ENCODE measurements at regions of chr14 and their contacts with region 1.

Region 1: DNA sequence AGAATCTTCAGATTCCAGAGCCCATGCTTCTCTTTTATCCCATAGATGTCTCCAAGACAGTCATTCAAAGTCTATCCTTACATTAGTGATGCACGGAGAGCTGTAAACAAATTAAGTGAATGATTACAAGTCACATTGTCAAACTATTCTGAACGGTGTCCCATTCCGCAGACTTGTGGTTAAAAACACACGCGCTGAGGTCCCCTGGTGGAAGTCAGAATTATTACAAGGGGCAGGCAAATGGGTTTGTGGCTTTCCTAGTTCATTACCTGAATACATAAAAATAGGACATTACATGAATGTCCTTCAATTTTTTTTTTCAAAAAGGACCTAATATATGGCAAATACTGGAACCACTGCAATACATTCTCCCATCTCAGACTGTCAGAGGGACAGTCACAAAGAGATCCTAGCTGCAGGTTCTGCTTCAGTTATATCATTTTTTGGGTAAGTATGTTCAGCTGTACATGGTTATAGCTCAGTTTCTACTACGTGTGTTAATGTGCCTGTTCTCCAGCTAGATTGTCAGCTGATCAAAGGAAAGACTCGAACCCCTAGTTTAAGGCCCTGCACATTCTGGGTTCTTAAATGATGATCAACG is 53.1 kb upstream of the STON2 start:
- DNase-seq: peak in 1 of 2 experiments; percentile 74
- H3K4me3 ChIP-seq: no peak overlapping the region
- H3K27ac ChIP-seq: no peak overlapping the region
- H3K4me1 ChIP-seq: peaks cover 0 to 10% (median 7%) of the 10 kb centered on the region in 4 experiments; a peak in 4 of 7 replicates
- H3K27me3 ChIP-seq: no peaks in the 10 kb centered on the region; a peak in 1 of 7 replicates
- CTCF ChIP-seq: peak; percentile 58 to 88 (median 81)
- EP300 ChIP-seq: no peak
- POLR2A ChIP-seq: no peak
- RAD21 ChIP-seq: peak; percentile 93 to 94

Region 2: GRCh38 chr14:81247146-81247766 is 206.0 kb before region 1 on chr14:
- CTCF ChIA-PET with region 1: interaction called, 23 read pairs
- POLR2A ChIA-PET with region 1: interaction called, 4 read pairs
- DNase-seq: no peak
- H3K4me3 ChIP-seq: no peak overlapping the region
- H3K27ac ChIP-seq: no peak overlapping the region
- H3K4me1 ChIP-seq: no peaks in the 10 kb centered on the region
- H3K27me3 ChIP-seq: no peaks in the 10 kb centered on the region
- CTCF ChIP-seq: no peak
- EP300 ChIP-seq: no peak
- POLR2A ChIP-seq: no peak
- RAD21 ChIP-seq: no peak

Region 3: DNA sequence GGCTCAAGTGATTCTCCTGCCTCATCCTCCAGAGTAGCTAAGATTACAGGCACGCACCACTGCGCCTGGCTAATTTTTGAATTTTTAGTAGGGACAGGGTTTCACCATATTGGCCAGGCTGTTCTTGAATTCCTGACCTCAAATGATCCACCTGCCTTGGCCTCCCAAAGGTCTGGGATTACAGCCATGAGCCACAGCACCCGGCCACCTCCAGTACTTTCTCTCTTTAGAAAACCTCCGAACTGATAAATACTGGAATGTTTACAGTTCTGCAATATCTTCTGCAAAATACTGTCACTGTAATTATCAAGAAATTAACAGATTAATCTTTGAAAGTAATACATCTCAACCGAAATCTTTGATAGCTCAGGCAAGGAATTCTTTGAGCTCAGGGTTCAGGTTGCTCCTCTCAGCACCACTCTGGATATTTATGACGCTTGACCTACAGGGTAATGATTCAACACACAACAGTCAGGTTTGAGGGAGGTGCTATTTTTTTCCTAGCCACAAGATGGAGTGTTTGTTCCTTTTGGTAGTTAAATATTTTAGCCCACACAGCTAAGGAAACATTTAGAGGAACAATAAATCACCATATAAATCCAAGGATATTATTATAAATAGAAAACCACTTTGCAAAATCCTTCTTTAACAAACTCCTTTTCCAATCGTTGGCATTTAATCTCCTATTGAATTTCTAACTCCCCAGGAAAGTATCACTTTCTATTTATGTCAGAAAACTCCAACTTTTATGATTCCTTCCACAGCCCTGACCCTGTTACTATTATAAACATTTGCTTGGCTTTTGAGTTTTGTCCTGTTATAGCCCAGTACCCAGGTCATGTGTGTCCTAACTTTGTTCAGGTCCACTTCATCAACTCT is 183.9 kb before region 1 on chr14:
- CTCF ChIA-PET with region 1: interaction called, 426 read pairs
- POLR2A ChIA-PET with region 1: interaction called, 5 read pairs
- DNase-seq: no peak
- H3K4me3 ChIP-seq: no peak overlapping the region
- H3K27ac ChIP-seq: no peak overlapping the region
- H3K4me1 ChIP-seq: no peaks in the 10 kb centered on the region
- H3K27me3 ChIP-seq: no peaks in the 10 kb centered on the region
- CTCF ChIP-seq: peak in 2 of 3 experiments; percentile 69 to 71; a peak in 3 of 4 replicates
- EP300 ChIP-seq: no peak
- POLR2A ChIP-seq: no peak
- RAD21 ChIP-seq: peak; percentile 87 to 88

Region 4: DNA sequence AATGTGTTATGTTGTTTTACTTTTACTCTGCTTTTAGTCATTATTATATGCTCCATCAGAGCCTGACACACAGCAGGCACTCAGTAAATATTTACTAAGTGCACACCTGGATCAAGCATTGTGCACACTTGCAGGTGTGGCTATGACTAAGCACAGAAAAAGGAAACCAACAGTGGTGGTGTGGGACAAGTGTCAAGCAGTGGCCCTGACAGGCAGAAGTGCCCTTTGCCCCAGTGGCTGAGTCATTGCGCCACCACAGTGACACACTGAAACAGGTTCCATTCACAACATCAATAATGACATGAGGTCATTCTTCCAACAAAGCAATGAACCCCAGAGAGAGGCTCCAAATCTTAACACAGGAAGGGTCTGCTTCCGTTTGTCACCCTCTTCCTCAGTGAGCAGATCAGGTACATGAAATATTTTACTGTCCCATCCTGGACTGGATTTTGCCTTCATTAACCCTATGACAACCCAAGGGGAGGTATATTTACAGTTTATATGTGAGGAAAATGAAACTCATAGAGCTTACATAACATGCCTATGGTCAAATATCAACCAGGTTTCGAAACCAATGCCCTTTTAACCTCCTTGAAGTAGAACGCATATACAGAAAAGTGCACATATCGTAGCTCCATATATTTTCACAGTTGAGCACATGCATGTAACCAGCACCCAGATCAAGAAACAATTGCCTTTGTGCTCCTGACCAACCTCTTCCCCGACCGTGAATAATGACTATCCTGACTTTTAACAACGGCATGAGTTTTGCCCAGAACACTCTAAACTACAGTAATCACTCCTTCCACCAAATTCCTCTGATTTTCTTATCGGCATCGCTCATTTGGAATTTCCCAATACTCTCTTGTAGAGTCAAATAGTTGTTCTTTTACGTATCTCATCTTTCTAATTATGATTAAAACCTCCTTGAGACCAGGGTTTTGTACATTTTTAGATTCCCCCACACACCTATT is 149.7 kb before region 1 on chr14:
- CTCF ChIA-PET with region 1: interaction called, 16 read pairs
- POLR2A ChIA-PET with region 1: no interaction called
- DNase-seq: no peak
- H3K4me3 ChIP-seq: no peak overlapping the region
- H3K27ac ChIP-seq: no peak overlapping the region
- H3K4me1 ChIP-seq: peaks cover 0 to 7% (median 2%) of the 10 kb centered on the region in 4 experiments; a peak in 3 of 7 replicates
- H3K27me3 ChIP-seq: peaks cover 0 to 3% (median 0%) of the 10 kb centered on the region in 4 experiments; a peak in 1 of 7 replicates
- CTCF ChIP-seq: no peak
- EP300 ChIP-seq: no peak
- POLR2A ChIP-seq: no peak
- RAD21 ChIP-seq: no peak

Region 5: DNA sequence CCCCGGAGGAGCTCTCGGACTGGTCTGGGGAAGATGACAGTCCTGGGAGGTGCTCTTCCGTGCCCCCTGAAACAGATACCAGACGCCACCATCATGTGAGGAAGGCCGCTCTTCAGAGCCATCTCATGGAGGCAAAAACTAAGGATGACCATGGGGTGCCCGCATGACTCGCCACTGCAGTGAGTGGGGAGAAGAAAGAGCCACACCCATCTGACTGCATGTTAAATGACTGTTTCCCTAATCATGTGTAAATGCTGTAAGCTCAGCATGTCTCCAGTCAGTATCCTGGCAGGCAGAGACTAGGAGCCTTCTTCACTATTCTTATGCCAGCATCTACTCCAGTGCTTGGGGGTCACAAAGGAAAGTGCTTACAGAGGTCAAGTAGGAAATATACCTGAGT is 57.2 kb before region 1 on chr14:
- CTCF ChIA-PET with region 1: interaction called, 12 read pairs
- POLR2A ChIA-PET with region 1: no interaction called
- DNase-seq: no peak
- H3K4me3 ChIP-seq: no peak overlapping the region
- H3K27ac ChIP-seq: no peak overlapping the region
- H3K4me1 ChIP-seq: peaks cover 0 to 4% (median 0%) of the 10 kb centered on the region in 4 experiments; a peak in 2 of 7 replicates
- H3K27me3 ChIP-seq: no peaks in the 10 kb centered on the region
- CTCF ChIP-seq: no peak
- EP300 ChIP-seq: no peak
- POLR2A ChIP-seq: no peak
- RAD21 ChIP-seq: no peak

Region 6: DNA sequence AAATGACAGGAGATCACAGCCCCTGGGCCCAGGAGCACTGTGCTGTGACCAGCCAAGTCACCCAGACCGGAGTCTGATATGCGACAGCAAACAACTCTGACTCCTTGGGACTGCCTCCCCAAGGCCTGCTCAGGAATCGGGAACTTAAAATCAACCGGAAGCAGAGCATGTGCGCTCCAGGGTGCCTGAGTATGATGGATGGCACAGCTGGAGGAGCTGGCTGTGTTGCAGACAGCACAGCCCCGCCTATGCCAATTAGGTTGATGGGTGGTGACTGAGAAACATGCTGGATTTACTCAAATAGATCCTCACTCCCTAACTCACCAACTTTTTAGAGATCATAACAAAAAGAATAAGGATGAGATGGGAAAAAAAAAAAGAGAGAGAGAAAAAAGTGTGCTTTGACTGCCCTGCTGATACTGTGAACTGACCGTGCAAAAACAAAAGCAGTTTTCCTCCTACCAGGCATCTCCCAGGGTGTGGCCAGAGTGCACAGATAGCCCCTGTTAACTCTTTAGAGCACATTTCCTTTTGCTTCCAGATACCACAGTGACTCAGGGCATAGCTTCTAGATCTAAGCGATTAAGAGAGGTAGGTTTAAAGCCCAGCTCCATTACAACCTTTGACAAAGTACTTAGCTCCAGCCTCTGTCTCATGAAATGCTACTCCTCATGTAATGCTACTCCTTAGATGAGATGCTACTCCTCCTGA is 25.8 kb before region 1 on chr14:
- CTCF ChIA-PET with region 1: interaction called, 22 read pairs
- POLR2A ChIA-PET with region 1: no interaction called
- DNase-seq: no peak
- H3K4me3 ChIP-seq: no peak overlapping the region
- H3K27ac ChIP-seq: no peak overlapping the region
- H3K4me1 ChIP-seq: peaks cover 0 to 15% (median 3%) of the 10 kb centered on the region in 4 experiments; a peak in 3 of 7 replicates
- H3K27me3 ChIP-seq: no peaks in the 10 kb centered on the region
- CTCF ChIP-seq: no peak
- EP300 ChIP-seq: no peak
- POLR2A ChIP-seq: no peak
- RAD21 ChIP-seq: no peak

Region 7: DNA sequence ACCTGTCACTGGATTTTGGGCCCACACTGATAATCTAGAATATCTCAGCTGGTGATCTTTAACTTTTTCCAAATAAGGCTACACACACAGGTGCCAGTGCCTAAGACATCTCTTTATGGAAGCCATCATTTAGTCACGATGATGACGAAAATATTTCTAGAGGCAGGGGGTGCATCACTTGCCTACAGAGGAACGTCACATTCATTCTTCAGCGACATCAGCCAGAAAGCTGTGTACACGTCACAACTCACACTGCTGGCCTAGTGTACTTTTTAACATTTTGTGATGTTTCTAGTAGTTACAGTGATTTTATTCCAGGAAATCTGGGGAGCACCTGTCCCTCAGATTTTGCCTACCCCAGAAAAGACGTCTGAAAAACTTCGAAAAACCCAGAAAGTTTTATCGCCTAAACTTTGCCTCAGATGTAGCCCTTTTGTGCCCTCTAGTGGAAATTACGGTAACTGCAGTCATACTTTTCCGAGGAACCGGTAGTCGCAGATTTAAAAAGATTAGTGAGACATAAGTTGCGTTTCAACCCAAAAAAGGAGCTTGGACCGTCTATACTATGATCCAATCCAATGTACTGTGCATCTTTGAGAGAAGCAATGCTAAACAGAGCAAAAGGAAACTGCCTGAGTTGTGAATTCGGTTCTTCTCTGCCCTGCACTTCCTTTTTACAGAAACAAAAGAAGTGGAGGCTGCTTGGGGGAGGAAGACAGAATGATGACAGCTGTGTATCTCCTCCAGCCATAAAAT is 11.2 kb after region 1 on chr14:
- CTCF ChIA-PET with region 1: interaction called, 66 read pairs
- POLR2A ChIA-PET with region 1: no interaction called
- DNase-seq: peak; percentile 9 to 80
- H3K4me3 ChIP-seq: peak overlapping the region; percentile 9 to 51 (median 30); a peak in 5 of 8 replicates
- H3K27ac ChIP-seq: no peak overlapping the region
- H3K4me1 ChIP-seq: no peaks in the 10 kb centered on the region
- H3K27me3 ChIP-seq: no peaks in the 10 kb centered on the region
- CTCF ChIP-seq: peak in 2 of 3 experiments; percentile 77 to 83; a peak in 3 of 4 replicates
- EP300 ChIP-seq: no peak
- POLR2A ChIP-seq: no peak
- RAD21 ChIP-seq: peak; percentile 94 to 95

Measured in H1 (cell line).